Natural killer cell (primary cell): ENCODE measurements at regions of chr1 and their contacts with region 1.

Region 1: GRCh38 chr1:183655562-183656075 is 2.5 kb upstream of the APOBEC4 start:
- DNase-seq: peak; percentile 60 to 88
- ATAC-seq: peak; percentile 79 to 92 (median 91)
- H3K4me3 ChIP-seq: no peak overlapping the region
- H3K4me3 Mint-ChIP-seq: no peak overlapping the region
- H3K27ac ChIP-seq: no peak overlapping the region
- H3K27ac Mint-ChIP-seq: no peak overlapping the region
- H3K4me1 ChIP-seq: no peaks in the 10 kb centered on the region
- H3K4me1 Mint-ChIP-seq: no peaks in the 10 kb centered on the region
- H3K27me3 ChIP-seq: no peaks in the 10 kb centered on the region
- H3K27me3 Mint-ChIP-seq: peaks cover 15 to 21% of the 10 kb centered on the region in 2 donors
- CTCF ChIP-seq: peak; percentile 81

Region 2: GRCh38 chr1:183424691-183425090 is 230.9 kb before region 1 on chr1:
- intact Hi-C with region 1: no loop called
- DNase-seq: no peak
- ATAC-seq: no peak
- H3K4me3 ChIP-seq: no peak overlapping the region
- H3K4me3 Mint-ChIP-seq: no peak overlapping the region
- H3K27ac ChIP-seq: no peak overlapping the region
- H3K27ac Mint-ChIP-seq: no peak overlapping the region
- H3K4me1 ChIP-seq: no peaks in the 10 kb centered on the region
- H3K4me1 Mint-ChIP-seq: no peaks in the 10 kb centered on the region
- H3K27me3 ChIP-seq: peaks cover 8% of the 10 kb centered on the region
- H3K27me3 Mint-ChIP-seq: peaks cover 15 to 49% of the 10 kb centered on the region in 2 donors
- CTCF ChIP-seq: no peak

Region 3: DNA sequence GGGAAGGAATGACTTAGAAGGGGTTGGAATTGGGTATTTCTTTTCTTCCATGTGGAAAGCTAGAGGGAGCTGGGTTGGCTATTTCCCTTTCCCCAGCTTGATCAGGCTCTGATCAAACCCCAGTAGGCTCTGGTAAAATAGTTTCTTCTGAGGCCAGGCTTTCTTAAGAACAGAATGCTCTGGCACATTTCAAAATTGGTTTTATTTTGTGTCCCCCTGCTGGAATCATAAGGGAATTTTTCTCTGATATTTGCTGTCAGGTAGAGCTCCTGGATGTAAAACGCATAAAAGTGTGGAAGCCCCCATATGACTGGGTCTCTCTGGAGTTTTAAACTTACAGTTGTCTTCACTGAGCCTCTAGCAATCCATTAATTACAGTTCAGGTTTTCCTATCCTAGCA is 14.6 kb after region 1 on chr1:
- intact Hi-C with region 1: no loop called
- DNase-seq: no peak
- ATAC-seq: no peak
- H3K4me3 ChIP-seq: no peak overlapping the region
- H3K4me3 Mint-ChIP-seq: no peak overlapping the region
- H3K27ac ChIP-seq: no peak overlapping the region
- H3K27ac Mint-ChIP-seq: no peak overlapping the region
- H3K4me1 ChIP-seq: no peaks in the 10 kb centered on the region
- H3K4me1 Mint-ChIP-seq: no peaks in the 10 kb centered on the region
- H3K27me3 ChIP-seq: no peaks in the 10 kb centered on the region
- H3K27me3 Mint-ChIP-seq: peaks cover 38 to 60% of the 10 kb centered on the region in 2 donors
- CTCF ChIP-seq: no peak

Region 4: DNA sequence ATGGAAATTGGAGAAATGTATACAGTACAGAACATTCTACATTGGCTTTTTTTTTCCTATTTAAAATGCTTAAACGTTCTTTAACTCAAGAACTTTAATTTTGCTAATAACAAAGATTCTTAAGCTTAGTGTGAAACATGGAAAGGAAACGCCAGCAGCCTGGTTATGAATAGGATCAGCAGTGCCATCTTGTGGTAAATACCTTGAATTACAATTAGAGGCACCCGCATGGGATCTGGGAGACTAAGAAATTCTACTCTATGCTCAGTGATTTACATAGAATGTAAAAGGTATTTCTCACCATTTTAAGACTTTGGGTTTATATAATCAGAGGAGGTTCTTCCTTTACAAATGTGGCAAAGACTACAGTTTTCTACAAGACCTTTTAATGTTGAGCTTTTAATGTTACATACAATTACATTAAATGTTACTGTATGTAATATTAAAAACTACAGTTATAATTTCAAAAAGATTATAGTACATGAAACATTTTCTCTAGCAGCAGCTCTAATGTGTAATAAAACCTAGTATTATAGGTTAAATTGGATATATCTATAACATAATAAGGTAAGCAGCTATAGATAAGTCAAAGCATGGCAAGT is 29.6 kb after region 1 on chr1:
- intact Hi-C with region 1: loop called (anchors 2 kb)
- DNase-seq: peak in 1 of 2 donors; percentile 75
- ATAC-seq: peak; percentile 71 to 88 (median 79)
- H3K4me3 ChIP-seq: no peak overlapping the region
- H3K4me3 Mint-ChIP-seq: no peak overlapping the region
- H3K27ac ChIP-seq: no peak overlapping the region
- H3K27ac Mint-ChIP-seq: no peak overlapping the region
- H3K4me1 ChIP-seq: no peaks in the 10 kb centered on the region
- H3K4me1 Mint-ChIP-seq: no peaks in the 10 kb centered on the region
- H3K27me3 ChIP-seq: peaks cover 6% of the 10 kb centered on the region
- H3K27me3 Mint-ChIP-seq: peaks cover 27 to 34% of the 10 kb centered on the region in 2 donors
- CTCF ChIP-seq: peak; percentile 88

Region 5: DNA sequence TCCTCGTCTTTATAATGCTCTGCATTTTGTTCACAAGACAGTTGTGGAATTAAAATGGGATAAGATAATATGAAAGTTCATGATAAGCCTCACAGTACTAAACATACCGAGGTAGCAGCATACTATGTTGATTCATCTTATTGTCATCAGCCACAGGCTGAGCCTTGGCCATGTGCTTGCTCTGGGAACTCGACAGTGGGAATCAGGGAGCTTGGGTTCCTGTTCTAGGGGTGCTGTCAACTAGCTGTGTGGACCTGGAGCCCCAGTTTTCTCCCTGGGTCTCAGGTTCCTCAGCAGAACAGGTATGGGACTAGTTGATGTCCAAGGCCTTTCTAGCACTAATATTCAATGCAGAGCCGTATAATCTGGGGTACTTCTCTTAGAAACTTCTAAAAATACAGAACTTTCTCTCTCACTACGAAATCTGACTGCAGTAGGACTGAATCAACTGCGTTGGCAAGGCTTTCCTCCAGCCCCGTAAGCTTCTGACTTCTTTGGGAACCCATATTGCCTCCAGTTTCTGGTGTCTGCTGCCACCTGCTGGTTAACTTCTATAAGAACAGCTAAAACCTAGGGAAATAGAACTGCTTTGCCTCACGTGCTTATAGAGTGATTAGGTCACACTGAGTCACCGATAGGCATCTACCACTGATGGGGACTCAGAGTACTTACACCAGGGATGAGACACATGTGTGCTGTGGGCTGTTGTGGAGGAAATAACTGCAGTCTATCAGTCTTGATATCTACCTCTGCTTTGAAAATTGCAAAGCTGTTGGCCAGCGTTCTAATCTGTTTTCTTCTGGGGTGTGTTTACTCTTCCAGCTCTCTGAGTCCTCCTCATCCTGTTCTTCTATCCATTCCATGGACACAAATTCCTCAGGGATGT is 260.2 kb after region 1 on chr1:
- intact Hi-C with region 1: loop called (anchors 1 kb)
- DNase-seq: peak; percentile 32 to 90
- ATAC-seq: peak; percentile 89 to 96 (median 94)
- H3K4me3 ChIP-seq: no peak overlapping the region
- H3K4me3 Mint-ChIP-seq: no peak overlapping the region
- H3K27ac ChIP-seq: no peak overlapping the region
- H3K27ac Mint-ChIP-seq: peak overlapping the region in 1 of 2 donors; percentile 62
- H3K4me1 ChIP-seq: peaks cover 7% of the 10 kb centered on the region
- H3K4me1 Mint-ChIP-seq: peaks cover 10 to 16% of the 10 kb centered on the region in 2 donors
- H3K27me3 ChIP-seq: no peaks in the 10 kb centered on the region
- H3K27me3 Mint-ChIP-seq: peaks cover 0 to 6% of the 10 kb centered on the region in 2 donors
- CTCF ChIP-seq: peak; percentile 86

Region 6: GRCh38 chr1:184222652-184223052 is 567.0 kb after region 1 on chr1:
- intact Hi-C with region 1: loop called (anchors 1 kb)
- DNase-seq: peak; percentile 39 to 63
- ATAC-seq: peak; percentile 60 to 76 (median 75)
- H3K4me3 ChIP-seq: no peak overlapping the region
- H3K4me3 Mint-ChIP-seq: peak overlapping the region; percentile 1
- H3K27ac ChIP-seq: no peak overlapping the region
- H3K27ac Mint-ChIP-seq: no peak overlapping the region
- H3K4me1 ChIP-seq: no peaks in the 10 kb centered on the region
- H3K4me1 Mint-ChIP-seq: peaks cover 0 to 5% of the 10 kb centered on the region in 2 donors
- H3K27me3 ChIP-seq: no peaks in the 10 kb centered on the region
- H3K27me3 Mint-ChIP-seq: peaks cover 10 to 18% of the 10 kb centered on the region in 2 donors
- CTCF ChIP-seq: peak; percentile 92

Region 7: GRCh38 chr1:184664042-184664655 is 1008.5 kb after region 1 on chr1:
- intact Hi-C with region 1: loop called (anchors 10 kb)
- DNase-seq: peak; percentile 48 to 60
- ATAC-seq: peak; percentile 76 to 86 (median 79)
- H3K4me3 ChIP-seq: no peak overlapping the region
- H3K4me3 Mint-ChIP-seq: no peak overlapping the region
- H3K27ac ChIP-seq: no peak overlapping the region
- H3K27ac Mint-ChIP-seq: no peak overlapping the region
- H3K4me1 ChIP-seq: peaks cover 10% of the 10 kb centered on the region
- H3K4me1 Mint-ChIP-seq: peaks cover 18 to 19% of the 10 kb centered on the region in 2 donors
- H3K27me3 ChIP-seq: peaks cover 9% of the 10 kb centered on the region
- H3K27me3 Mint-ChIP-seq: peaks cover 18 to 25% of the 10 kb centered on the region in 2 donors
- CTCF ChIP-seq: peak; percentile 86